ENCODE measurements at regions of chr20 and their contacts with region 1.

Region 1: GRCh38 chr20:47411161-47411560 is 54.7 kb upstream of the ZMYND8 start:
- DNase-seq: no peak
- H3K4me3 ChIP-seq: peak overlapping the region; percentile 75
- H3K27ac ChIP-seq: peak overlapping the region; percentile 99
- H3K4me1 ChIP-seq: peaks cover 83% of the 10 kb centered on the region
- CTCF ChIP-seq: no peak

Region 2: GRCh38 chr20:47356526-47357295 is 54.5 kb before region 1 on chr20 and contains the start of gene ZMYND8:
- CTCF ChIA-PET with region 1: no interaction called
- POLR2A ChIA-PET with region 1: interaction called, 4 read pairs
- intact Hi-C with region 1: loop called (anchors 2 kb)
- DNase-seq: peak; percentile 93
- H3K4me3 ChIP-seq: peak within 1 kb of the TSS; percentile 74
- H3K27ac ChIP-seq: peak within 1 kb of the TSS; percentile 90
- H3K4me1 ChIP-seq: peaks cover 76% of the 10 kb centered on the region
- CTCF ChIP-seq: no peak
- total RNA-seq, gene ZMYND8: 26.1 and 30.4 TPM in 2 replicates

Region 3: DNA sequence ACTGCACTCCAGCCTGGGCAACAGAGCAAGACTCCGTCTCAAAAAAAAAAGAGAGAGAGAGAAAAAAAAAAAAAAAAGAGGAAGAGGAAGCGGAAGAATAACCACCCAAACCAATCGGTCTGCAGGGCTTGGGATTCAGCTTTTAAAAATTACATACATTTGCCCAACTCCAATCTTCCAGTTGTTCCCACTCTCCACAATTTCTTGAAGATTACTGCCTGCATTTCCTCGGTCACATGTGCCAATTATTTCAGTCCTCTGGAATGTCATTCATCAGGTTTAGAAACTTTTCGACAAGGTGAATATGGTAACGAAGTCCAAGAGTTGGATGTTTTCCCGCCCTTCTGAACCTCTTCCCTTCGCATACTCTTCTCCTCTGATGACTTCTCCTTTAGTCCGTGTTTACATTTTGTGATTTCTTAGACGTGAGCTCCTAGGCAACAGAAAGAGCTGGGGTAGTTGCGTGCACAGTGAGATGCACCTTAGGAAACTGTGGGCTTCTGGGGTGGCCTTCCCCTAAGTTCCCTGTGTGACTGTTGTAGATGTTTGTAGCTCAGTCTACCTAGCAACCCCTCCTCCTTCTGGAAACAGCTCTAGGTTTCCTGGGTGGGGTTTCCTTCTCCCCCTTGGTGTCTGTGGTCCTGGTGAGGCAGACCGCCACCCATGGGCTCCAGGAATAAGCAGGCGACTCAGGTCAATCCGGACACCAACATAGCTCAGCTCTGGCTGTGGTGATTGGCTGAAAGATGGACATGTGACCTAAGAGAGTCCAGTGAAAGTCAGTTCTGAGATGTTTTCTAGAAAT is 27.6 kb after region 1 on chr20:
- CTCF ChIA-PET with region 1: interaction called, 6 read pairs
- POLR2A ChIA-PET with region 1: interaction called, 143 read pairs
- intact Hi-C with region 1: loop called (anchors 2 kb)
- DNase-seq: peak; percentile 85
- H3K4me3 ChIP-seq: peak overlapping the region; percentile 60
- H3K27ac ChIP-seq: peak overlapping the region; percentile 84
- H3K4me1 ChIP-seq: peaks cover 69% of the 10 kb centered on the region
- CTCF ChIP-seq: no peak

Region 4: GRCh38 chr20:47453142-47453782 is 42.1 kb after region 1 on chr20:
- CTCF ChIA-PET with region 1: no interaction called
- POLR2A ChIA-PET with region 1: interaction called, 13 read pairs
- intact Hi-C with region 1: loop called (anchors 1 kb)
- DNase-seq: peak; percentile 70
- H3K4me3 ChIP-seq: no peak overlapping the region
- H3K27ac ChIP-seq: peak overlapping the region; percentile 46
- H3K4me1 ChIP-seq: peaks cover 66% of the 10 kb centered on the region
- CTCF ChIP-seq: no peak

Region 5: DNA sequence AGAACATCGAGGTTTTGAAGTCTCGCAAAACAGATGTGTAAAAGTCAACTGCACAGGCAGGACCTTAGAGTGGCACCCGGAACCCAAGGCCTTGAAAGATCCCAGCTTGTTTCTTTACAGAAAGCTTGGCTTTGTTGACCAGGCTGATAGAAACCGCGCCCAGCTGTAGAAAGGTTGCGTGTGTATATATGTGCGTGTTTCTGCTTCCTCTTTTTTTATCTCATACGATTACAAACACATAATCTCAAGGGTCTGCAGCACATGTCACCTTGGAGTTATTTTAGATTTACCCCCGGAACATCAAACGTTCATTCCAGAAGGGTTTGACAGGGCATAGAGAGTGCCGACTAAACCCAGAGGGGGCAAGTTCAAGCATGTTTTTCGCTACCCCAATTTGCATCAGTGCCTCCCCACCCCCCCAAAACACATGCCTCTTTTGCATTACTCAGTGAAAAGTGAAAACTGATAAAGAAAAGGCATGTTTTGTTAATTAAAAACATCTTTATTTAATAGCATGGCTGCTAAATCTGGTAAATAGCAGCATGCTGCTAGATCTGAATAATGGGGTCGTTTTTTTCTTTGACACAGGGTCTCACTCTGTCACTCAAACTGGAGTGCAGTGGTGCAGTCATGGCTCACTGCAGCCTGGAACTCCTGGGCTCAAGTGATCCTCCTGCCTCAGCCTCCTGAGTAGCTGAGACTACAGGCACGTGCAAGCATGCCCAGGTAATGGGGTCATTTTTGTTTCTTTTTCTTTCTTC is 57.3 kb after region 1 on chr20:
- CTCF ChIA-PET with region 1: interaction called, 3 read pairs
- POLR2A ChIA-PET with region 1: interaction called, 24 read pairs
- intact Hi-C with region 1: loop called (anchors 1 kb)
- DNase-seq: peak; percentile 94
- H3K4me3 ChIP-seq: peak overlapping the region; percentile 37
- H3K27ac ChIP-seq: peak overlapping the region; percentile 95
- H3K4me1 ChIP-seq: peaks cover 90% of the 10 kb centered on the region
- CTCF ChIP-seq: no peak

Region 6: GRCh38 chr20:47487175-47487917 is 76.2 kb after region 1 on chr20:
- CTCF ChIA-PET with region 1: interaction called, 3 read pairs
- POLR2A ChIA-PET with region 1: interaction called, 64 read pairs
- intact Hi-C with region 1: loop called (anchors 1 kb)
- DNase-seq: peak; percentile 96
- H3K4me3 ChIP-seq: peak overlapping the region; percentile 55
- H3K27ac ChIP-seq: peak overlapping the region; percentile 98
- H3K4me1 ChIP-seq: peaks cover 97% of the 10 kb centered on the region
- CTCF ChIP-seq: no peak